ENCODE measurements at regions of chr10 and their contacts with region 1.

Region 1: DNA sequence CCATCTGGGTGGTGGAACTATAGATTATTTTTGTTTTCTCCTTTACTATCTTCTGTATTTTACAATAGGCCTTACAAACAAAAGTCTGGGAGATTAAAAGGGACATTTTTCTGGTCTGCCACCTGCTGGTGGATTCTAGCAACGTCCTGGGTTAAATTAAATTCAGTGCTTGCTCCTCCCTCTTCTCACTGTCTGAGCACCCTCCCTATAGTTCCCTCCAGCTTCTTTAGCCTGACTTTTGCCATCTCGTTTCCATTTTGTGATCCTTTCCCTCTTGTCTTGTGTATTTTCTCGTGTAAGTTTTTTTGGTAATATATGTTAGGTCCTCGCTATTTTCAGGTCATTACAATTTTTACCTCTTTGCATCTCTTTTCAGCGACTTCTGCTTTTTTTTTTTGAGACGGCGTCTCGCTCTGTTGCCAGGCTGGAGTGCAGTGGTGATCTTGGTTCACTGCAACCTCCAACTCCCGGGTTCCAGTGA is 16.1 kb downstream of the ANKRD16 start:
- DNase-seq: peak; percentile 82 to 89 (median 83)
- H3K4me3 ChIP-seq: peak overlapping the region in 5 of 7 experiments; percentile 50 to 84 (median 60)
- H3K27ac ChIP-seq: peak overlapping the region in 1 of 2 experiments; percentile 14
- H3K4me1 ChIP-seq: no peaks in the 10 kb centered on the region
- H3K27me3 ChIP-seq: no peaks in the 10 kb centered on the region

Region 2: DNA sequence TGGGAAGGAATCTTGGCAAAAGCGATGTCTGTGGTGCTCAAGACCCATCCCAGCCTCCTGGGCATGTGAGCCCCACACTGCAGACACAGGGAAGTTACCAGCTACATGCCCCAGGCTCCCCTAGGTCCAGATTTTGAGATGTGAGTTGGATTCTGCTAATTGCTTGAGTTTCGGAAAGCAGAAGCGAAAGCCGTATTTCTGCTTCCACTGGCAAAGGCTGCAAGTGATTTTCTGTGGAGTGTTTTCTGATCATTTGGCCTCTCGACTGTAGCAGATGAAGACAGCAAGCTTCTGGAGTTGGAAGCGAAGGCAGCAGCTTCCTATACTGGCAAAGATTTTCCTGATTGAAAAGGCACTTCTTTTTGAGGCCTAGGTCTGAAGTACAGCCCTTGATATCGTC is 13.5 kb before region 1 on chr10:
- CTCF ChIA-PET with region 1: interaction called, 12 read pairs
- POLR2A ChIA-PET with region 1: no interaction called
- DNase-seq: no peak
- H3K4me3 ChIP-seq: no peak overlapping the region
- H3K27ac ChIP-seq: no peak overlapping the region
- H3K4me1 ChIP-seq: no peaks in the 10 kb centered on the region
- H3K27me3 ChIP-seq: no peaks in the 10 kb centered on the region

Region 3: DNA sequence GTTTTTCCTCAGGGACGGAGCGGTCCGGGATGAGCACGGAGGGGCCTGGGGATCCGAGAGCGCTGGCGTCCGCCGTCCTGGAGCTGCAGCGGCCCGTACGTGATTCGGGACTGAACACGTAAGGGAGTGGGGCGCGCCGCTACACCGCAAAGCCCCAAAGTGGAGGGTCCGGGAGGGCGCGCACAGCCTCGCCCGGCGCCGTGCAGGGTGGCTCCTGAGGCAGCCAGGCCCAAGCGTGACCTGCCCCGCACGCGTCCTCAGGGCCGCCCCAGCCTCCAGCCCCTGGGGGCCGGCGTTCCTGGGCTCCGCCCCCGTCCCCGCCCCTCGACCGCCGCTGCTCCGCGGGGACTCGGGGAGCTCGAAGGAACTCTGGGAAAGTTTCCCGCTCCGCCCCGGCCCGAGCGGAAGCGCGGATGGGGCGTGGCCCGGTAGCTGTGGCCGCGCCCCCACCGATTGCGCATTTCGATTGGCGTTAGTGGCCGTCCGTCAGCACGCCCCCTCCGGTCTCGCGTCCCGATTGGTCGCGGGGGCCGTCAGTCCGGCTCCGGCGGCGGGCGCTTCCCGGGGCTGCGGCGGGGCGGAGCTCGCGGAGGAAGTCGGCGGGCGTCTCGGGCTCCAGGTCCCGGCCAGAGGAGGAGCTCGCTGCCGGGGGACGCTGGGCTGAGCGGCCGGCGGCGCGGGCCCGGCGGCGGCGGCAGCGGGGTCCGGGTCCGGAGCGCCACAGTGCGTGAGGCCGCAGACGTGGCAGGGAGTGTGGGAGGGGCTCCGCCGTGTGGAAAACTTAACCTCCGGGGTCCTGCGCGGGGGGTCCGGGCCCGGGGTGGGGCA is 16.3 kb after region 1 on chr10 and contains the starts of genes ANKRD16 and FBH1:
- CTCF ChIA-PET with region 1: interaction called, 11 read pairs
- POLR2A ChIA-PET with region 1: no interaction called
- DNase-seq: peak; percentile 97 to 98 (median 97)
- H3K4me3 ChIP-seq: peak within 1 kb of the TSS; percentile 51 to 89 (median 85)
- H3K27ac ChIP-seq: peak within 1 kb of the TSS; percentile 25 to 65
- H3K4me1 ChIP-seq: peaks cover 6 to 27% (median 21%) of the 10 kb centered on the region in 4 experiments
- H3K27me3 ChIP-seq: no peaks in the 10 kb centered on the region

Region 4: DNA sequence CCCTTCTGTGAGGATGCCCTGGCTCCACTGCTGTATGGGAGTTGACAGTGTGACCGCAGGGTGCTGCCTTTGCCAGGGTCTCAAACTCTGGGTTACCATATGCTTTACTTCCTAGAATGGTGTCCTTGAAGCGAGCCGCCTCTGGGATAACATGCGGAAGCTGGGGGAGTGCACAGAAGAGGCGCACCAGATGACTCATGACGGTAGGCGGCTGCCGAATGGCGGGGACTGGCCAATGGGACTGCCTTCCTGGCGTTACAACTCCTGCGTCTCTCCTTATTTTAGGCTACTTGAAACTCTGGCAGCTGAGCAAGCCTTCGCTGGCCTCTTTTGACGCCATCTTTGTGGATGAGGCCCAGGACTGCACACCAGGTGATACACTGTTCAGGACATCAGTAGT is 43.8 kb after region 1 on chr10:
- CTCF ChIA-PET with region 1: no interaction called
- POLR2A ChIA-PET with region 1: no interaction called
- DNase-seq: no peak
- H3K4me3 ChIP-seq: no peak overlapping the region
- H3K27ac ChIP-seq: no peak overlapping the region
- H3K4me1 ChIP-seq: no peaks in the 10 kb centered on the region
- H3K27me3 ChIP-seq: no peaks in the 10 kb centered on the region

Measured in common myeloid progenitor, CD34-positive (primary cell).